ENCODE measurements at regions of chr7 and their contacts with region 1.

Region 1: DNA sequence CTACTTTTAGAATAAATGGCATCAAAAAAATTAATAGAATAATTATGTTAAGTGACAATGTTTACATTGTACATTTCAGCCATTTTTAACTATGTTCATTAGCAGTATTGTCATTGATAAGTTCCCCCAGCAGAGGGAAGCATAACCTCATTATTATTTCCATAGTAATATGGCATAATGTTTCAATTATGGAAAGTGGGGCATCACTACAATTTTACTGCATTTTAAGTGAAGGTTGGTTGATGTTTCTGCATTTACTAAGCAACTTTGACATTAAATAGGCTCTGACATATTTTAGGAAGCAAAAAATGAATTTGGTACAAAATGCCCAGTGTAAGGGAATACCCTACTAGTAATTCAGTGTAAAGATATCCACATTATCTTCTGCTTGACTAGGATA is 218.3 kb downstream of the SEMA3A start:
- DNase-seq: peak in 1 of 2 donors; percentile 4
- ATAC-seq: no peak
- H3K4me3 ChIP-seq: no peak overlapping the region
- H3K27ac ChIP-seq: no peak overlapping the region
- H3K4me1 ChIP-seq: no peaks in the 10 kb centered on the region
- H3K27me3 ChIP-seq: no peaks in the 10 kb centered on the region
- CTCF ChIP-seq: peak; percentile 25 to 83 (median 69)

Region 2: DNA sequence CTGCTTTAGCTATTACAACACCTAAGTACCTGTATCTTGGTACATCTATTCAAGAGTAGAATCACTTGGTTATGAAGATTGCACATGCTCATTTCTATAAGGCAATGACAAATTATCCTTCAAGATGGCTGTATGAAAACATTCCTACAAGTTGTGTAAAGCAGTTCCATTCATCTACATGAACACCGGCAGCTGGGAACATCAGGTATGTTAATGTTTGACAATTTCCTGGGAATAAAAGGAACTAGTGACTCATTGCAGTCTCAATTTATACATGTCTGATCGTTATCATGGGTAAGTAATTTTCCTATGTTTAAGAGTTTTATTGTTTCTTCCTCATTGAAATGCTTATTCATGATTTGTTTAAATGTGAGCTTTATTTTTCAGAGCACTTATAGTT is 124.2 kb before region 1 on chr7:
- intact Hi-C with region 1: no loop called
- DNase-seq: no peak
- ATAC-seq: no peak
- H3K4me3 ChIP-seq: no peak overlapping the region
- H3K27ac ChIP-seq: no peak overlapping the region
- H3K4me1 ChIP-seq: no peaks in the 10 kb centered on the region
- H3K27me3 ChIP-seq: no peaks in the 10 kb centered on the region
- CTCF ChIP-seq: no peak

Region 3: GRCh38 chr7:84002348-84002747 is 26.1 kb after region 1 on chr7:
- intact Hi-C with region 1: loop called in 1 of 10 experiments (anchors 2 kb)
- DNase-seq: no peak
- ATAC-seq: no peak
- H3K4me3 ChIP-seq: no peak overlapping the region
- H3K27ac ChIP-seq: no peak overlapping the region
- H3K4me1 ChIP-seq: no peaks in the 10 kb centered on the region
- H3K27me3 ChIP-seq: no peaks in the 10 kb centered on the region
- CTCF ChIP-seq: no peak

Region 4: GRCh38 chr7:84455788-84456187 is 479.5 kb after region 1 on chr7:
- intact Hi-C with region 1: loop called in 2 of 10 experiments (anchors 10 kb)
- DNase-seq: no peak
- ATAC-seq: no peak
- H3K4me3 ChIP-seq: no peak overlapping the region
- H3K27ac ChIP-seq: no peak overlapping the region
- H3K4me1 ChIP-seq: no peaks in the 10 kb centered on the region
- H3K27me3 ChIP-seq: no peaks in the 10 kb centered on the region
- CTCF ChIP-seq: no peak